GM18951 (cell line): ENCODE measurements at regions of chr6 and their contacts with region 1.

Region 1: GRCh38 chr6:109382576-109383437 is 540 bp upstream of the CD164 start:
- POLR2A ChIP-seq: peak; percentile 58

Region 2: GRCh38 chr6:109187399-109188114 is 195.2 kb before region 1 on chr6:
- in situ Hi-C with region 1: loop called (anchors 10 kb)
- POLR2A ChIP-seq: no peak

Region 3: GRCh38 chr6:109623288-109623687 is 240.5 kb after region 1 on chr6:
- in situ Hi-C with region 1: no loop called
- POLR2A ChIP-seq: no peak